Dorsolateral prefrontal cortex (tissue), 120 donors: ENCODE measurements at regions of chr12 and their contacts with region 1.

Region 1: DNA sequence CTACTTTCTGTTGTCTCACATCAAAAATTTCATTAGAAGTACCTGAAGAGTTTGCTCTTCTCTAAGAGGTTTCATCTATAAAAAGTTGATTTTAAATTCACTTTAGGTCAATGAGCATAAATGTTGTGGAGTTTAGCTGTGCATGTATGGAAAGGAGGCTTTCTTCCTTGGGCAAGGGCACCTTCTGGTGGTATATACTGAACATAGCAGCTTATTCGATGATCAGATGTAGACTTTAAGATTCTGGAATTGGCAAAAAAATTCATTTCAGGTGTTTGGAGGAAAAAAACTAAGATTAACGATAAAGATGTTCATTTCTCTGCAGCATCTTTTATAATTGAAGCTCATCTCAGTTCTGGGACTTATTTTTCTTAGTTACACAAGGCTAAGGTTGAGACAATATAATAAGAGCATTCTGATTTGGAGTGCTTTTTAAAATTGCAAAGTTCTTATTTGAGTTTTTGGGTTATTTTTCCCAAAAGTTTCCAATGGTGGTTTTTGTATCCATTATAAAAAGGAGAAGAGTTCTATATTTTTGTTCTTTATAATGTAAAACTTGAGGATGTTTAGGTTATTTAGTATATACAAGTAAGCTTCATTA is 46.8 kb downstream of the TMEM117 start:
- DNase-seq: peak in 1 of 10 donors; percentile 32
- H3K4me3 ChIP-seq: no peak overlapping the region
- H3K27ac ChIP-seq: no peak overlapping the region
- H3K27me3 ChIP-seq: no peaks in the 10 kb centered on the region
- CTCF ChIP-seq: peak; percentile 49 to 92 (median 82)

Region 2: GRCh38 chr12:43444940-43445564 is 437.6 kb before region 1 on chr12:
- intact Hi-C with region 1: loop called in 1 of 2 experiments (anchors 10 kb)
- DNase-seq: peak in 4 of 10 donors; percentile 6 to 65 (median 30)
- H3K4me3 ChIP-seq: no peak overlapping the region
- H3K27ac ChIP-seq: no peak overlapping the region
- H3K27me3 ChIP-seq: no peaks in the 10 kb centered on the region
- CTCF ChIP-seq: peak; percentile 62 to 89 (median 77)

Region 3: GRCh38 chr12:43758728-43759563 is 123.7 kb before region 1 on chr12 and contains the starts of genes IRAK4 and PUS7L:
- intact Hi-C with region 1: loop called (anchors 2 to 5 kb)
- DNase-seq: peak; percentile 92 to 96 (median 94)
- H3K4me3 ChIP-seq: peak within 1 kb of the TSS; percentile 60 to 97 (median 84)
- H3K27ac ChIP-seq: peak within 1 kb of the TSS in 54 of 59 donors; percentile 14 to 90 (median 67)
- H3K27me3 ChIP-seq: no peaks in the 10 kb centered on the region
- CTCF ChIP-seq: peak in 55 of 56 donors; percentile 32 to 78 (median 60)
- total RNA-seq, gene IRAK4: 4.0 to 15.1 (median 8.3) TPM
- total RNA-seq, gene PUS7L: 12.6 to 43.8 (median 22.5) TPM

Region 4: DNA sequence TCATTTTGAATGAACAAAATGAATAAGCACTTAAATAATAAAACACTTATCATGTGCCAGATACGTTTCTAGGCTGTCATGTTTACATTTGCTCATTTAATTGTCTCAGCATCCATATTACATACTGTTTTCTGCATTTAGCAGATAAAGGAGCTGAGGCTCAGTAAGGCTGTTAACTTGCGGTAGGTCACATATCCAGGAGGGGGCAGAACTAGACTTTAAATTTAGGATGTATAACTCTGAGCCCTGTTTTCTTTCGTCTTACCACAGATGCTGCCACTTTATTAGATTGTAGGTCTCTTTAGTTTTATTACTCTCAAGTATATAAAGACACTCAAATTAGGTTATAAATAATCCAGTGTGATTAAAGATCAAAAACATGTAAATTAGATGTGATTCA is 106.2 kb before region 1 on chr12:
- intact Hi-C with region 1: loop called in 1 of 2 experiments (anchors 5 kb)
- DNase-seq: no peak
- H3K4me3 ChIP-seq: no peak overlapping the region
- H3K27ac ChIP-seq: no peak overlapping the region
- H3K27me3 ChIP-seq: no peaks in the 10 kb centered on the region
- CTCF ChIP-seq: peak in 50 of 56 donors; percentile 20 to 66 (median 42)

Region 5: DNA sequence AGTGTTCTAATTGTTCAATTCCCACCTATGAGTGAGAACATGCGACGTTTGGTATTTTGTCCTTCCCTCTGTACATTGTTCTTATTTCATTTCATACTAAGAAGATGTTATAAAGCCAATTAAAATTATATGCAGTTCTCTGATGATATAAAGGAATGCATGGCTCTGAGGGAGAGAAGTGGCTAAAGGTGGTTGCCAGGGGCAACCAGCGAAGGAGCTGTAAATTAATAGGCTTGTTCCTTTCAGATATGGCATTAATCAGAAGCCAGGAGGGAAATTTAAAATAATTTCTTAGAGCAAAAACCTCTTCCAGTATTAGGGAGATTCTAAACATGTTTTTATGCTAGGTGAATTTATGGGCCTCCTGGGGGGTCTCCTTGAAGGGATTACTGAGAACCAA is 181.0 kb after region 1 on chr12:
- intact Hi-C with region 1: no loop called
- DNase-seq: no peak
- H3K4me3 ChIP-seq: no peak overlapping the region
- H3K27ac ChIP-seq: no peak overlapping the region
- H3K27me3 ChIP-seq: no peaks in the 10 kb centered on the region
- CTCF ChIP-seq: no peak